MCF 10A (cell line): ENCODE measurements at regions of chr11 and their contacts with region 1.

Region 1: DNA sequence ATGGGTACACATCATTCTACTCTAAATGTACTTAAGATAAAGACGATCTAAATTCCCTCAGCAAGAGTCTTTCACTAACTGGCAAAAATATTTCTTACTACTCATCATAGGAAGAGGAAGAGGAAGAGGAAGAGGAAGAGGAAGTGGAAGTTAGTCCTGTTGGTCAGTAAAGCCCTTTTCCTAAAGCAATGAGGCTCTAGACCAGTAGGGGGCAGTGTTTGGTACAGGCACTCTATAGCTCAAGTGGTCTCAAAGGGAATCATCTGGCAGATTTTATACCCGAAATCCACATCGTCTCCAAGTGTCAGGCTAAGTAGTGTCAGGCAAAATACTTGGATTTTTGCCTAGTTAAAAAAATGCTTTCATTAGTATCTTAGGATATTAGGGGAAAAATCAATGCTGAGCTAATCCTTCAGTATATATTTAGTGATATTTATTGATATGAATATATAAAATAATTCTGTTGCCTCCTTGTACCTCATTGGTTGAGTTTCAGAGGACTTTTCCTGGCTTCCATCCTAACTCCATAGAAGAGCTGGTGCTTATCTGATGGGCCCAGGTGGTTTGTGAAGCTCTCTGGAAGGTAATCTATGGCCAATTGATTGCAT is 7.7 kb downstream of the BLID start:
- DNase-seq: peak; percentile 60
- H3K4me3 Mint-ChIP-seq: no peak overlapping the region
- H3K27ac Mint-ChIP-seq: peak overlapping the region; percentile 47
- H3K4me1 Mint-ChIP-seq: peaks cover 40% of the 10 kb centered on the region
- H3K27me3 Mint-ChIP-seq: no peaks in the 10 kb centered on the region
- CTCF ChIP-seq: peak; percentile 50

Region 2: DNA sequence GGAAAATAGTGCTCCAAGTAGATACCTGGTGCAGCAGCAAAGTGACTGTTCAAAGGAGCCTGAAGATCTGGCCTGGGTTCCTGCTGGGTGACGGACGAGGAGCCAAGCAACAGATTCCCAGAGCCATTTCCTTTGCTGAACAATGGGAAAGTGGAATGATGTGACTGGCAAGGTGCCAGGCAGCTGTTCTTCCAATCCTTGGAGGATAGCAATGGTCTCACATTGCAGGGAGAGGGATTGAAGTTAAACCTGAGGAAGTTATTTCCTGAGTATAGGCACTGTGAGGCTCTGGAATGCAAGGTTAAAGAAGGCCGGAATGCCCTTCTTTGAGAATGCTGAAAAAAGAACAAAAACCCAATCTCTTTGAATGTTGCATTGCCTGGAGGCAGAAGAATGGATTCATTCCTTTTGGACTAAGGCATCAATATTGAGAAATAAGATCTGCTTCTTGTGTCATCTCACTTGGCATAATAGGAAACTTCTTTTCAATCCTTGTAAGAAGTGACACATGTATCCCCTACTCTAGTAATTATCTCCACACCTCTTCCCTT is 216.1 kb before region 1 on chr11:
- CTCF ChIA-PET with region 1: no interaction called
- POLR2A ChIA-PET with region 1: no interaction called
- intact Hi-C with region 1: no loop called
- DNase-seq: peak; percentile 88
- H3K4me3 Mint-ChIP-seq: no peak overlapping the region
- H3K27ac Mint-ChIP-seq: peak overlapping the region; percentile 25
- H3K4me1 Mint-ChIP-seq: peaks cover 67% of the 10 kb centered on the region
- H3K27me3 Mint-ChIP-seq: no peaks in the 10 kb centered on the region
- CTCF ChIP-seq: no peak

Region 3: DNA sequence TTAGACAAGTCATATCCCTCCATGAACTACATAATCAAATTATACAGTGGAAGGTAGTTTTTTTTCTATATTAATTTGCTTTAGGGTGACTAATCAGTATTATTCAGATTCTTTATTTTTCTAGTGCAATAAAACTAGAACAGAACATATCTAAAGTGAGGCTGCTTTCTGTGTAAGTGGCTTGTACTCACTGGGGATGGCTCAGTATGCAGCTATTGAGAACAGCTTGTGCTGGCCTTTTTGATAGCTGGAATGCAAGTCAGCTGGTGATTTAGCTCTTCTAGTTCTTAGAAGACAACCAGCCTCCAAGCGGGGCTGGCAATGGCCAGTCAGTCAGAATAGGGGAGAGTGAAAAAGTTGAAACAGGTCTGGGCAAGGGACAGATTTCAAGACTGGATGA is 111.7 kb before region 1 on chr11:
- CTCF ChIA-PET with region 1: no interaction called
- POLR2A ChIA-PET with region 1: no interaction called
- intact Hi-C with region 1: no loop called
- DNase-seq: no peak
- H3K4me3 Mint-ChIP-seq: no peak overlapping the region
- H3K27ac Mint-ChIP-seq: no peak overlapping the region
- H3K4me1 Mint-ChIP-seq: no peaks in the 10 kb centered on the region
- H3K27me3 Mint-ChIP-seq: no peaks in the 10 kb centered on the region
- CTCF ChIP-seq: no peak

Region 4: DNA sequence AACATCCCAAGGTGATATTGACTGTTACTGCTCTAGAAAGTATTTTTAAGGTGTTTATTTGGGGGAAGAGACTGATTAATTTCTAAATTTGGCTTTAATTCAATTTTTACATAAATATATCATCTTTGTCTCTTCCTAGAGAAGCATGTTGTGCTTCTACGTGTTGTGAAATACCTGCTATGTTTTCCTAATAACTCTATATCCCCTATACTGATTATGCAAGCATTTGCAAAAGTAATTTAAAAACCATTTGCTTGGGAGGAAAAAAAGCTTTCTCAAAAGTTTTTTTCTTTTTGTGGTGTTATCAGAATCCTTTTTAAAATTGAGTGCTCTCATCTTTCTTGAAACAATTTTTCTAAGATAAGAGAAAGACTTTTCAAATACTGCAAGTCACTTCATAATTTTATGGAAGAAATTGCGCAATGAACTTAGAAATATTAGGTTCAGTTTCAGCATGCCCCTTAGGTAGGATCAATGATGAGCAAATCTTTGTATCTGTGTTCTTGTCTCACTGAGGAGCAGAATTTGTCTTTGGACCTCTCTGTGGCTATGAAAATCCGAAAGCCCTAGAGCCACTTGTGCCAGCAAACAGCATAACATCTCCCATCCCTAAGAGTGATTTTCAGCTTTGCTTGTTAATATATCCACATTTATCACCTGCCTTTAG is 15.1 kb after region 1 on chr11:
- CTCF ChIA-PET with region 1: interaction called, 5 read pairs
- POLR2A ChIA-PET with region 1: interaction called, 11 read pairs
- intact Hi-C with region 1: loop called (anchors 1 kb)
- DNase-seq: peak; percentile 42
- H3K4me3 Mint-ChIP-seq: no peak overlapping the region
- H3K27ac Mint-ChIP-seq: peak overlapping the region; percentile 75
- H3K4me1 Mint-ChIP-seq: peaks cover 22% of the 10 kb centered on the region
- H3K27me3 Mint-ChIP-seq: no peaks in the 10 kb centered on the region
- CTCF ChIP-seq: no peak